Aorta (tissue), 5 donors: ENCODE measurements at regions of chr3 and their contacts with region 1.

Region 1: DNA sequence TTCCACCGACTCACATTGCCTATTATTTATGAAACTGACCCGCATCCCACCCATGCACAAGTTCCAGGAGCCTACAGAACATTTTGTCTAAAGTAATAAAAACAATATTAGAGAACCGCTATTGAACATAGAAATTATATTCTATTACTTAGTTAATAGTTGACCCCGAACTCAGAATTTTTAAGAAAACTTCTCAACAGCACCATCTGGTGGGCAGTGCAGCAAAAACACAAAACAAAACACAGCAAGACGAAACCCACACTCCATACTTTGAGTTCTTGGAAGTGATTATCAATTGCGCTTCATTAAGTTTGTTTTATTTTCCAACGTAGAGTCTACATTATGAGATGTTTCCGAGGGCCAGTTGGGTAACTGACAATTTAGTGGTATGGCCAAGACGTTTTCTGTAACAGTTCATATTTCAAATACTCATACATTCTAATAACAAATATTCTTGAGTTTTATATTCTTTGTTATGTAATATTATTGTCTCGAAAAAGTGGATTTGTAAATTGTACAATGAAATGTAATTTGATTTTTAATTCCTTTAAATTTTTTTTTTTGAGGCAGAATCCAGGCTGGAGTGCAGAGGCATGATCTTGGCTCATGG is 24.0 kb upstream of the C3orf70 start:
- DNase-seq: no peak
- ATAC-seq: no peak
- H3K4me3 ChIP-seq: no peak overlapping the region
- H3K27ac ChIP-seq: no peak overlapping the region
- H3K4me1 ChIP-seq: no peaks in the 10 kb centered on the region
- H3K27me3 ChIP-seq: no peaks in the 10 kb centered on the region

Region 2: GRCh38 chr3:184874709-184875644 is 301.9 kb before region 1 on chr3:
- intact Hi-C with region 1: loop called (anchors 5 kb)
- DNase-seq: no peak
- ATAC-seq: no peak
- H3K4me3 ChIP-seq: no peak overlapping the region
- H3K27ac ChIP-seq: no peak overlapping the region
- H3K4me1 ChIP-seq: no peaks in the 10 kb centered on the region
- H3K27me3 ChIP-seq: no peaks in the 10 kb centered on the region

Region 3: DNA sequence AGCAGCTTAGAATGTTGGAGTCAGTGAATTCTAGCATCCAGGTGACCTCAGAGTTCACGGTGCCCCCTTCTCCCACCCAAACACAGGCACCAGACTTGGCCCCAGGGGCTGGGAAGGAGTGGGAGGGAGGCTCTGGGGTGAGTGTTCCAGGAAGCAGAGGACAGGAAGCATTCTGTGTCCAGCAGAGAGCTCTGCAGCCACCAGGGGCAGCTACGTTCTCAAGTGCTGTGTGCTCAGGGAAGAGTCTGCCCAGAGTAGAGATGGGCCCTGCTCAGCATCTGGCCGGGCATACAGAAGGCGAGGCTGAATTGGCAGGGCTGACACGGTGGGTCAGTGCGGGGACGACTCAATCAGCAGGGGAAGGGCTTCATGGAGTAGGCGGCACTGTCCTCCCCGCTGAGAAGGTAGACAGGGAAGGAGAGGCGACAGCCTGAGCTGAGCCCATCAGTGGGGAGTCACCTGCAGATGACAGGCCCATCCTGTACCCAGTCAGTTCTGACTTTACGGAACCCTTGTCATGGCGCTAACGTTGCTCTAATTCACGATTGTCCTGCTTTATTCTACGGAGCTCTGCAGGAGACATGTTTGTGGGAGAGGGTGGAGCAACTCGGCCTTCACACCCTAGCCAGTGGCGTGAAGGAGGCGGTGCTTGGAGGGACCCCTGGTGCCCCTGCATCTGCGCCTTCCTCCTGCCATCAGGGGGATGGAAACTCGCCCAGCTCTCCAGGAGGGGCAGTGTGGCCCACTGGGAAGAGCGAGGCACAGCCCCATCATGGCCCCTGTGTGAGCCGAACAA is 106.2 kb before region 1 on chr3:
- intact Hi-C with region 1: loop called (anchors 5 to 10 kb)
- DNase-seq: peak in 1 of 2 donors; percentile 59
- ATAC-seq: peak; percentile 34
- H3K4me3 ChIP-seq: no peak overlapping the region
- H3K27ac ChIP-seq: no peak overlapping the region
- H3K4me1 ChIP-seq: no peaks in the 10 kb centered on the region
- H3K27me3 ChIP-seq: no peaks in the 10 kb centered on the region